Activated CD4-positive, alpha-beta T cell treated with anti-CD3 and anti-CD28 coated beads for 36 hours (primary cell): ENCODE measurements at regions of chrX and their contacts with region 1.

Region 1: DNA sequence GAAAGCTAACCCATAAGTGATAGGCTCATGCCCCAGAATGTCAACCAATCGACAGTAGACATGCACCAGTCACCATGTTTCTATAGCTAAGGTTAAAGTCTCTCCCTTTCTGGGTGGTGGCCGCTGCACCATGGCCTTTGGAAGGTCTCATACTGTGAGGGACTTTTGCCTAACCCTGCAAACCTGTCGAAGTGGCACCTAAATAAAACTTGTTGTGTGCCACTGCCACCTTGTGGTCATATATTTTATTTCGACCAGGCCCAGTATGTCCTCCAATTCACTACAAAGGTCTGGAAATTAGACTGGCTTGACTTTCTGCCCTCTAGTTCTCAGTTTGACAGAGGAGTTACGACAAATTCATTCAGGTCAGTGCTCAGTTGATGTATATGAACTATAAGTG is 163.1 kb downstream of the SMARCA1 start:
- DNase-seq: peak; percentile 58
- ATAC-seq: peak; percentile 44
- H3K4me3 Mint-ChIP-seq: no peak overlapping the region
- H3K27ac Mint-ChIP-seq: no peak overlapping the region
- H3K4me1 Mint-ChIP-seq: no peaks in the 10 kb centered on the region
- H3K27me3 Mint-ChIP-seq: no peaks in the 10 kb centered on the region

Region 2: GRCh38 chrX:128106630-128107029 is 1253.5 kb before region 1 on chrX:
- CTCF ChIA-PET with region 1: no interaction called
- POLR2A ChIA-PET with region 1: no interaction called
- intact Hi-C with region 1: loop called in 1 of 2 experiments (anchors 5 kb)
- DNase-seq: no peak
- ATAC-seq: no peak
- H3K4me3 Mint-ChIP-seq: no peak overlapping the region
- H3K27ac Mint-ChIP-seq: no peak overlapping the region
- H3K4me1 Mint-ChIP-seq: no peaks in the 10 kb centered on the region
- H3K27me3 Mint-ChIP-seq: no peaks in the 10 kb centered on the region

Region 3: DNA sequence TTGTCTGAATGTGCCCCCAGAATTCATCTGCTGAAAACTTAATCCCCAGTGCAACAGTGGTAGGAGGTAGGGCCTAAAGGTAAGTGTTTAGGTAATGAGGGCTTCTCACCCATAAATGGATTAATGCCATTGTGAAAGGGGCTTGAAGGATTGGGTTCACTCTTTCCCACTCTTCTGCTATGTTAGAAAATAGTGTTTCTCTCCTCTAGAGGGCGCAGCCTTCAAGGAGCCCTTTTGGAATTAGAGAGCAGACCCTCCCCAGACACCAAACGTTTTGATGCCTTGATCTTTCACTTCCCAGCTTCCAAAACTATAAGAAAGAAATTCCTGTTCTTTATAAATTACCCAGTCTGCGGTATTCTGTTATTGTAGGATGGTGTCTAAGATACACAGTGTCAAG is 543.3 kb before region 1 on chrX:
- CTCF ChIA-PET with region 1: no interaction called
- POLR2A ChIA-PET with region 1: no interaction called
- intact Hi-C with region 1: loop called in 1 of 2 experiments (anchors 2 kb)
- DNase-seq: no peak
- ATAC-seq: no peak
- H3K4me3 Mint-ChIP-seq: no peak overlapping the region
- H3K27ac Mint-ChIP-seq: no peak overlapping the region
- H3K4me1 Mint-ChIP-seq: no peaks in the 10 kb centered on the region
- H3K27me3 Mint-ChIP-seq: no peaks in the 10 kb centered on the region

Region 4: GRCh38 chrX:129318375-129318774 is 41.8 kb before region 1 on chrX:
- CTCF ChIA-PET with region 1: no interaction called
- POLR2A ChIA-PET with region 1: no interaction called
- intact Hi-C with region 1: loop called in 1 of 2 experiments (anchors 1 kb)
- DNase-seq: peak; percentile 8
- ATAC-seq: no peak
- H3K4me3 Mint-ChIP-seq: no peak overlapping the region
- H3K27ac Mint-ChIP-seq: no peak overlapping the region
- H3K4me1 Mint-ChIP-seq: no peaks in the 10 kb centered on the region
- H3K27me3 Mint-ChIP-seq: no peaks in the 10 kb centered on the region

Region 5: GRCh38 chrX:129347291-129347690 is 12.9 kb before region 1 on chrX:
- CTCF ChIA-PET with region 1: no interaction called
- POLR2A ChIA-PET with region 1: no interaction called
- intact Hi-C with region 1: no loop called
- DNase-seq: no peak
- ATAC-seq: no peak
- H3K4me3 Mint-ChIP-seq: no peak overlapping the region
- H3K27ac Mint-ChIP-seq: no peak overlapping the region
- H3K4me1 Mint-ChIP-seq: no peaks in the 10 kb centered on the region
- H3K27me3 Mint-ChIP-seq: no peaks in the 10 kb centered on the region

Region 6: GRCh38 chrX:129686422-129686948 is 326.3 kb after region 1 on chrX:
- CTCF ChIA-PET with region 1: no interaction called
- POLR2A ChIA-PET with region 1: no interaction called
- intact Hi-C with region 1: no loop called
- DNase-seq: no peak
- ATAC-seq: no peak
- H3K4me3 Mint-ChIP-seq: no peak overlapping the region
- H3K27ac Mint-ChIP-seq: no peak overlapping the region
- H3K4me1 Mint-ChIP-seq: no peaks in the 10 kb centered on the region
- H3K27me3 Mint-ChIP-seq: no peaks in the 10 kb centered on the region